ENCODE measurements at regions of chr5 and their contacts with region 1.

Region 1: DNA sequence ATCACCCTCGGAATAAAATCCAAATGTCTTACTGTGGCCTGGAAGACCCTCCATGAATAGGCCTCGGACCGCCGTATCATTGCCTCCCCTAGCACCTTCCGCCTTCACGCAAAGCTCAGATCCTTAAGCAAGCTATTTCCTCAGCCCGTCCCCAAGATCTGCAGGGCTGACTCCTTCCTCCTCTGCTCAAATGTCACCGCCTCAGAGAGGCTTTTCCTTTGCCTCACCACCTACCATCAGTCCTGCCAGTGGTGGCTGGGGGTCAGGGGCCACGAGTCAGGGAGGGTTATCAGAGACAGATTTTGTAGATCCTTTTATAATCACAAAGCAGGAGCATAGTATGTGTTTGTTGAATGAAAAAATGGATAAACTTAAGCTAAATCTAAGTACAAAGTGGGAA is 74.4 kb upstream of the KIF2A start:
- DNase-seq: no peak
- ATAC-seq: no peak
- H3K4me3 ChIP-seq: no peak overlapping the region
- H3K27ac ChIP-seq: no peak overlapping the region
- H3K4me1 ChIP-seq: peaks cover 0 to 4% of the 10 kb centered on the region in 2 experiments; a peak in 1 of 5 replicates
- H3K27me3 ChIP-seq: no peaks in the 10 kb centered on the region
- CTCF ChIP-seq: no peak
- EP300 ChIP-seq: no peak
- POLR2A ChIP-seq: no peak
- RAD21 ChIP-seq: no peak

Region 2: GRCh38 chr5:61866930-61867329 is 364.6 kb before region 1 on chr5:
- CTCF ChIA-PET with region 1: no interaction called
- POLR2A ChIA-PET with region 1: no interaction called
- in situ Hi-C with region 1: no loop called
- intact Hi-C with region 1: no loop called
- DNase-seq: peak; percentile 10 to 36 (median 14)
- ATAC-seq: peak; percentile 56; the same call in 2 of the 3 replicates
- H3K4me3 ChIP-seq: no peak overlapping the region
- H3K27ac ChIP-seq: no peak overlapping the region
- H3K4me1 ChIP-seq: no peaks in the 10 kb centered on the region; a peak in 1 of 5 replicates
- H3K27me3 ChIP-seq: no peaks in the 10 kb centered on the region
- CTCF ChIP-seq: no peak
- EP300 ChIP-seq: no peak
- POLR2A ChIP-seq: no peak
- RAD21 ChIP-seq: no peak

Region 3: DNA sequence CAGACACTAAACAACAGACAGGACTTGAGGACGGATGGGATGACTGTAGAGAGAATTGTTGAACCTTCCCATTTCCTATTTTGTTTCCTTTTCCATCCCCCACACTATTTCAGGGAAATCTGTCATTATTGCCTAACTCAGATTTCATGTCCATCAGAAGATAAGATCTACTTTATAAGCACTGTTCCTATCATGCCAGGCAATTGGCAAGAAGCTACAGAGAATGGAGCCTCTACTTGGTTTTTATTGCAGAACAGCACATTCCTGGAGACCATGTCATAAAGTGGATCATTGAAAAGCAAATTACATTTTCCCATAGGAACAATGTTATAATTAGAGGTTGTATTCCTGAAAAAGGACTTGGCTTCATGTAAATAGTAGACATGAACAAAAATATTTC is 99.3 kb before region 1 on chr5:
- CTCF ChIA-PET with region 1: no interaction called
- POLR2A ChIA-PET with region 1: no interaction called
- in situ Hi-C with region 1: no loop called
- intact Hi-C with region 1: no loop called
- DNase-seq: no peak
- ATAC-seq: no peak
- H3K4me3 ChIP-seq: no peak overlapping the region
- H3K27ac ChIP-seq: no peak overlapping the region
- H3K4me1 ChIP-seq: no peaks in the 10 kb centered on the region
- H3K27me3 ChIP-seq: 0 out of 5 replicates have a peak, but pooled peaks cover 0 to 4% of the 10 kb centered on the region in 2 experiments
- CTCF ChIP-seq: no peak
- EP300 ChIP-seq: no peak
- POLR2A ChIP-seq: no peak
- RAD21 ChIP-seq: no peak

Region 4: GRCh38 chr5:62178258-62178657 is 53.3 kb before region 1 on chr5:
- CTCF ChIA-PET with region 1: no interaction called
- POLR2A ChIA-PET with region 1: no interaction called
- in situ Hi-C with region 1: no loop called
- intact Hi-C with region 1: no loop called
- DNase-seq: no peak
- ATAC-seq: no peak
- H3K4me3 ChIP-seq: no peak overlapping the region
- H3K27ac ChIP-seq: no peak overlapping the region
- H3K4me1 ChIP-seq: no peaks in the 10 kb centered on the region
- H3K27me3 ChIP-seq: peaks cover 0 to 5% of the 10 kb centered on the region in 2 experiments; a peak in 3 of 5 replicates
- CTCF ChIP-seq: no peak
- EP300 ChIP-seq: no peak
- POLR2A ChIP-seq: no peak
- RAD21 ChIP-seq: no peak

Region 5: GRCh38 chr5:62268234-62268633 is 36.7 kb after region 1 on chr5:
- CTCF ChIA-PET with region 1: no interaction called
- POLR2A ChIA-PET with region 1: no interaction called
- in situ Hi-C with region 1: no loop called
- intact Hi-C with region 1: loop called (anchors 5 kb)
- DNase-seq: no peak
- ATAC-seq: no peak
- H3K4me3 ChIP-seq: no peak overlapping the region
- H3K27ac ChIP-seq: no peak overlapping the region
- H3K4me1 ChIP-seq: peaks cover 10 to 26% of the 10 kb centered on the region in 2 experiments; a peak in 4 of 5 replicates
- H3K27me3 ChIP-seq: no peaks in the 10 kb centered on the region
- CTCF ChIP-seq: no peak
- EP300 ChIP-seq: no peak
- POLR2A ChIP-seq: no peak
- RAD21 ChIP-seq: no peak

Region 6: GRCh38 chr5:62340392-62340791 is 108.8 kb after region 1 on chr5:
- CTCF ChIA-PET with region 1: no interaction called
- POLR2A ChIA-PET with region 1: interaction called, 3 read pairs
- in situ Hi-C with region 1: loop called (anchors 5 kb)
- intact Hi-C with region 1: loop called (anchors 5 kb)
- DNase-seq: peak in 3 of 4 experiments; percentile 32 to 50 (median 34)
- ATAC-seq: peak; percentile 73
- H3K4me3 ChIP-seq: no peak overlapping the region
- H3K27ac ChIP-seq: no peak overlapping the region
- H3K4me1 ChIP-seq: peaks cover 0 to 9% of the 10 kb centered on the region in 2 experiments; a peak in 2 of 5 replicates
- H3K27me3 ChIP-seq: no peaks in the 10 kb centered on the region
- CTCF ChIP-seq: peak; percentile 26 to 56 (median 52); a peak in 4 of 6 replicates
- EP300 ChIP-seq: no peak
- POLR2A ChIP-seq: no peak
- RAD21 ChIP-seq: peak in 1 of 2 experiments; percentile 48; a peak in 3 of 4 replicates

Region 7: DNA sequence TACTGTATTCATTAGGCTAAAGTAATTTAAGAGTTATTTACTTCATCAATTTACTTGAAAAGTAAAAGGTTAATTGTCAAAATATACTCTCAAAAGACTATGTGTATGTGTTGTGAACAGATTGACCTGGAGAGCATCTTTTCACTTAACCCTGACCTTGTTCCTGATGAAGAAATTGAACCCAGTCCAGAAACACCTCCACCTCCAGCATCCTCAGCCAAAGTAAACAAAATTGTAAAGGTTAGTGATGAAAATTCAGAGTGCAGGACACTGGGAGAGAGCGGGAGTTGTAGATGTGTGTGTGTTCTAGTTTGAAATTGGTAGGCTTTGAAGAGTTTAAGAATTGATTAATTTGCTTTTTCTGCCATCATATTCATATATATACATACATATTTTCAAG is 116.4 kb after region 1 on chr5:
- CTCF ChIA-PET with region 1: no interaction called
- POLR2A ChIA-PET with region 1: interaction called, 4 read pairs
- in situ Hi-C with region 1: loop called (anchors 5 kb)
- intact Hi-C with region 1: loop called (anchors 5 kb)
- DNase-seq: no peak
- ATAC-seq: no peak
- H3K4me3 ChIP-seq: no peak overlapping the region
- H3K27ac ChIP-seq: no peak overlapping the region
- H3K4me1 ChIP-seq: peaks cover 0 to 10% of the 10 kb centered on the region in 2 experiments; a peak in 2 of 5 replicates
- H3K27me3 ChIP-seq: no peaks in the 10 kb centered on the region
- CTCF ChIP-seq: no peak
- EP300 ChIP-seq: no peak
- POLR2A ChIP-seq: no peak
- RAD21 ChIP-seq: no peak

Region 8: DNA sequence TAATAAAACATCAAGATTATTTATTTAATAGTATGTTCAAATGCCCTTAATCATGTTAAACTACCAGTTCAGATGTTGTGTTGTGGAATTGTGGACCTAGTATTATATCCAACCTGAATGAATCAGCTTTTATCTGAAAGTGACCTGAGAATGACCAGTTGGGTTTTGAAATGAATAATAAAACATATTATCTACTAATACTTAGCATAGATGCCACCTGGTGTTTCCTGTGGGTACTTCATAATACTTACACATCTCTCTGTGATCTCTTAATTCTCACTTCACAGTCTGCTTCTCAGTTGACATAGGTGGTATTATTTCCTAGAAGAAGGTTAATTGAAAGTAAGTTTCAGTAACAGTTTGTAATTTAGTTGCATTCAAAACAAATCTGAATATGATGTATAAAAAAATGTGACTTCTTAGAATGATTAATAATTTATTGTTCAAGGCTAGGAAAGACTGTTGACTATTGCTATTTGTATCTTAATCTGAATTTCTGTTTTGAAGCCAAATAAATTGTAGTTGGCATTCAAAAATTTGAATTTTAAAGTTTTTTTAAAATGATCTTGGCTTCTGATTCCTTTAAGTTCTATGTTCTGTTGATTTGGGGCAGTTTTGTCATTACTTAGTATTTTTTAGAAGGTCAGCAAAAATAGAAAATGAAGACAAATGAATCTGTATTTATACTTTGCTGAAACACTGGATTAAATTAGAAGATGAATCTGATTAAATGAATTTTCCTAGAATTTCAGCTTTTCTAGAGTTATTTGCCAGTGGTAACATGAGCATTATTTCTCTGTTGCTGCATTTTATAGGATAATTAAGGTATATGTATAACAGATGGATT is 122.7 kb after region 1 on chr5:
- CTCF ChIA-PET with region 1: no interaction called
- POLR2A ChIA-PET with region 1: interaction called, 4 read pairs
- in situ Hi-C with region 1: no loop called
- intact Hi-C with region 1: loop called (anchors 5 kb)
- DNase-seq: peak; percentile 23 to 54 (median 42)
- ATAC-seq: peak; percentile 77
- H3K4me3 ChIP-seq: no peak overlapping the region
- H3K27ac ChIP-seq: no peak overlapping the region
- H3K4me1 ChIP-seq: no peaks in the 10 kb centered on the region
- H3K27me3 ChIP-seq: no peaks in the 10 kb centered on the region
- CTCF ChIP-seq: peak; percentile 42 to 70 (median 54); a peak in 4 of 6 replicates
- EP300 ChIP-seq: no peak
- POLR2A ChIP-seq: no peak
- RAD21 ChIP-seq: peak; percentile 77 to 86

Measured in K562 (cell line).